ENCODE measurements at regions of chr19 and their contacts with region 1.

Region 1: DNA sequence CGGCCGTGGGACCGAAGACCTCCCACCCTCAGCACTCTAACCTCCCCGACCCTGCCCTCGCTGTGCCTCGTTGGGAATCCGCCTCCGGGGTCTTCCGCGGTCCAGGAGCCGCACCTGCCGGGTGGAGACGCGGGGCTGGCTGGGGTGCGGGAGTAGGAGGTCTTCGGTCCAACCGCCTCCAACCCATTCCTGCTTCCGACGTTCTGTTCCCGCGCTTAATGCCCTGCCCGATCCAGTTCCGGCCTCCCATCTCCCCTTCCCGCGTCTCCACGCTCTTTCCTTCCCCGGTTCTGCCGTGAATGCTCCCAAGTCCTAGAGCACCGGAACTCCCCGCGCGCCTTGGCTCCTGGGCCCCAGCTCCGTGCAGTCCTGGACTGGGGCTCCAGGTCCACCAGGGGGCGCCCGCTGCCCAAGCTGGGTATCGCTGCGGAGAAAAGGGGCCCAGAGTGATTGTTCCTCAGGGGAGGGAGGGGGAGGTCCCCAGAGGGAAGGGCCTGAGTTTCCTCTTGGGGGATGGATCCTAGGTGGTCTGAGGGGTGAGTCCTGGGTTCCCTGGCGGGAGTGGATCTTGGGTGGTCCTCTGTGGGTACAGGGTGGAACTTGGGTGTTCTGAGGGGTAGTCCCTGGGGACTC is 14.1 kb upstream of the TNFSF9 start:
- DNase-seq: peak; percentile 93
- ATAC-seq: peak; percentile 86
- H3K4me3 ChIP-seq: peak overlapping the region; percentile 74
- H3K27ac ChIP-seq: no peak overlapping the region
- H3K4me1 ChIP-seq: peaks cover 15% of the 10 kb centered on the region
- H3K27me3 ChIP-seq: no peaks in the 10 kb centered on the region
- CTCF ChIP-seq: peak; percentile 99

Region 2: DNA sequence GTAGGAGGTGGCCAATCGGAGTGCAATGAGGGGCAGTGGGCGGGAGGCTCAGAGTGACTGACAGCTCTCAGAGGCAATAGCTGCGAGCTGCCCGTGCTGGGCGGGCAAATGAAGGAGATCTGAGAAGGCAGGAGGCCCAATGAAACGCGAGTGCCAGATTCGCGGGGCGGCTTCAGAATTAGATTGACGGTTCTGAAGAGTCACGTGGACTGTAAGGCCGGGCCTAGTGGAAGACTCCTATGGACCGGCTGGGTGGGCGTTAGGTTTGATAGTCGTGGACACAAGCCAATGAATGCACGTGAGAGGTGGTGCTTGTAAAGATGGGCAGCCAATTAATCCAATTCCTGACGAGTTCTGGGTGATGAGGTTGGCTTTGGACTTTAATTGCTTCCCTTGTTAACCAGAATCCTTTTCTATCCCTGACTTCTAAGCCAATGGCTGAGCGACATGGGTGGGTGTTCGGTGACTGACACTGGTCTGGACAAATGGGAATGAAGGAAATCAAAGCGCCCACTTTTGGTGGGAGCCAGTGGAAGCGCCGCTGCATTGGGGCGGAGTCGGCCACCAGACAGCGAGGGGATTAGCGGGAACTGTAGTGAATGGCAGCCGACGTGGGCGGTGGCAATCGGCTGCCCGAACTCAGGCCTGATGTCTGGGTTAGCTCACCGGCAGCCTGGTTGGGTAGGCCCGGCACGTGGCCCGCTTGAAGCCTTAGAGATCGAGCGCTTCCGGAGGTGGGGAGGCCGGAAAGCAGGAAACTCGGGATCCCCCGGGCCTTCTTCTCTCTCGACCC is 91.6 kb before region 1 on chr19:
- CTCF ChIA-PET with region 1: no interaction called
- POLR2A ChIA-PET with region 1: no interaction called
- intact Hi-C with region 1: no loop called
- DNase-seq: peak; percentile 100
- ATAC-seq: peak; percentile 92
- H3K4me3 ChIP-seq: no peak overlapping the region
- H3K27ac ChIP-seq: no peak overlapping the region
- H3K4me1 ChIP-seq: peaks cover 17% of the 10 kb centered on the region; the same call in 1 of the 2 replicates
- H3K27me3 ChIP-seq: no peaks in the 10 kb centered on the region
- CTCF ChIP-seq: no peak

Region 3: DNA sequence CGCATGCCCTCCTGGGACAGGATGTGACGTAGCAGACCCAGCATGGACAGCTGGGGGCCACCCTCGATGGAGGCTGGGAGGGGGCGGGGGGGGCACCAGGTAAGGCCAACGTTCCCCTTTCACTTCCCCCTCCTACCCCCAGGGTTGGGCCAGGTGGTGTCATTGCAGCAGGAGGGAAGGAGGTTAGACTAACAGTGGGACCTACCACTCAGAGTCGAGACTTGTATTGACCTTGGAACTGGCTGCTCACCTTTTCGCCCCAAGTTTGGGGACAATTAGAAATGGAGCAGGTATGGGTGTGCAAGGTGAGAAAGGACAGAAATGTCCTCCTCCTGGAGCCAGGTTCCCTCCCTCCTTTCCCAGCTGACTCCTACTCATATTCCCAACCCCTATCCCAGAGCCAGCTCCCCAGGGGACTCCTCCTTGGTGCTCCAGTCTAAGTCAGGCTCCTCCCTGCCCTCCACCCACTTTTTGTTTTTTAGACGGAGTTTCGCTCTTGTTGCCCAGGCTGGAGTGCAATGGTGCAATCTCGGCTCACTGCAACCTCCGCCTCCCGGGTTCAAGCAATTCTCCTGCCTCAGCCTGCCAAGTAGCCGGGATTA is 74.6 kb before region 1 on chr19:
- CTCF ChIA-PET with region 1: no interaction called
- POLR2A ChIA-PET with region 1: no interaction called
- intact Hi-C with region 1: no loop called
- DNase-seq: no peak
- ATAC-seq: no peak
- H3K4me3 ChIP-seq: no peak overlapping the region
- H3K27ac ChIP-seq: no peak overlapping the region
- H3K4me1 ChIP-seq: no peaks in the 10 kb centered on the region
- H3K27me3 ChIP-seq: no peaks in the 10 kb centered on the region
- CTCF ChIP-seq: no peak

Region 4: DNA sequence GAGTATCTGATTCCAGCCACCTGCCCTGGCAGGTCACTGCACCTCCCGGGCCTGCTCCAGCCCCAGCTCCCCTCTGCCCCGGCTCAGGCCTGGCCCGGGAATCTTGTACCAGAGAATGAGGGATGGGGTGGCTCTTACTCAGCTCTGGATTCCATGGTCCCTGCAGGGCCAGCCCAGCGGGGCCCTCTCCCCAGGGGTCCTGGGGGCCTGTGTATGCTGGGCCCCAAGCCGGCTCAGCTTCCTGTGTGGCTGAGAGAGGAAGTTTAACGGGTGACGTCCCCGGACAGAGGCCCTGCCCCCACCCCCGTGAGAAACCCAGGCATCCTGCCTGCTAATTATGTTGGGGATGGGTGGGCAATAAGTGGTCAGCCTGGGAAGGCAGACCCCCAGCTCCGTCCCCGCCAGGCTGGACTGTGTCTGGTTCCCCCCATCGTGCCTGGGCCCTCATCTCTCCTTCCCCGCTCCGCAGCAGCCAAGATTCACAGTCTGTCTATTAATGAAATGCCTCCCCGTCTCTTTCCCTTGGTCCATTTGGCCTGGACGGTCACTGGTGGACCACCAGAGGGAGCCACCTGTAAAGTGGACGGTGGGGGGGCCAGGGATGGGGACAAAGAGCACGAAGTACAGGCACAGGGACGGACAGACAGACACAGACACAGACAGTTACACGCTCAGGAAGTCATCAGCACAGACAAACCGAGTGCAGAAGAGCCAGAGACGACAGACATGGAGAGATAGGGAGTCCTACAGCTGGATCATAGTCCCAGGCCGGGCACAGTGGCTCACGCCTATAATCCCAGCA is 35.0 kb before region 1 on chr19 and contains the start of gene DENND1C:
- CTCF ChIA-PET with region 1: no interaction called
- POLR2A ChIA-PET with region 1: no interaction called
- intact Hi-C with region 1: no loop called
- DNase-seq: peak; percentile 35
- ATAC-seq: peak; percentile 52
- H3K4me3 ChIP-seq: no peak within 1 kb of the TSS
- H3K27ac ChIP-seq: no peak within 1 kb of the TSS
- H3K4me1 ChIP-seq: no peaks in the 10 kb centered on the region
- H3K27me3 ChIP-seq: no peaks in the 10 kb centered on the region
- CTCF ChIP-seq: peak; percentile 71
- total RNA-seq, gene DENND1C: not detected in 2 replicates

Region 5: GRCh38 chr19:6580313-6580712 is 63.5 kb after region 1 on chr19:
- CTCF ChIA-PET with region 1: interaction called, 7 read pairs
- POLR2A ChIA-PET with region 1: no interaction called
- intact Hi-C with region 1: loop called (anchors 2 kb)
- DNase-seq: peak; percentile 91
- ATAC-seq: peak; percentile 99
- H3K4me3 ChIP-seq: no peak overlapping the region
- H3K27ac ChIP-seq: no peak overlapping the region
- H3K4me1 ChIP-seq: peaks cover 8% of the 10 kb centered on the region; the same call in 1 of the 2 replicates
- H3K27me3 ChIP-seq: no peaks in the 10 kb centered on the region
- CTCF ChIP-seq: no peak

Region 6: GRCh38 chr19:6862673-6863078 is 345.9 kb after region 1 on chr19:
- CTCF ChIA-PET with region 1: interaction called, 3 read pairs
- POLR2A ChIA-PET with region 1: no interaction called
- intact Hi-C with region 1: loop called (anchors 1 kb)
- DNase-seq: peak; percentile 96
- ATAC-seq: peak; percentile 85
- H3K4me3 ChIP-seq: peak overlapping the region; percentile 35; the same call in 1 of the 2 replicates
- H3K27ac ChIP-seq: no peak overlapping the region
- H3K4me1 ChIP-seq: peaks cover 6% of the 10 kb centered on the region; the same call in 1 of the 2 replicates
- H3K27me3 ChIP-seq: peaks cover 8% of the 10 kb centered on the region
- CTCF ChIP-seq: peak; percentile 98